ENCODE measurements at regions of chr2 and their contacts with region 1.

Region 1: DNA sequence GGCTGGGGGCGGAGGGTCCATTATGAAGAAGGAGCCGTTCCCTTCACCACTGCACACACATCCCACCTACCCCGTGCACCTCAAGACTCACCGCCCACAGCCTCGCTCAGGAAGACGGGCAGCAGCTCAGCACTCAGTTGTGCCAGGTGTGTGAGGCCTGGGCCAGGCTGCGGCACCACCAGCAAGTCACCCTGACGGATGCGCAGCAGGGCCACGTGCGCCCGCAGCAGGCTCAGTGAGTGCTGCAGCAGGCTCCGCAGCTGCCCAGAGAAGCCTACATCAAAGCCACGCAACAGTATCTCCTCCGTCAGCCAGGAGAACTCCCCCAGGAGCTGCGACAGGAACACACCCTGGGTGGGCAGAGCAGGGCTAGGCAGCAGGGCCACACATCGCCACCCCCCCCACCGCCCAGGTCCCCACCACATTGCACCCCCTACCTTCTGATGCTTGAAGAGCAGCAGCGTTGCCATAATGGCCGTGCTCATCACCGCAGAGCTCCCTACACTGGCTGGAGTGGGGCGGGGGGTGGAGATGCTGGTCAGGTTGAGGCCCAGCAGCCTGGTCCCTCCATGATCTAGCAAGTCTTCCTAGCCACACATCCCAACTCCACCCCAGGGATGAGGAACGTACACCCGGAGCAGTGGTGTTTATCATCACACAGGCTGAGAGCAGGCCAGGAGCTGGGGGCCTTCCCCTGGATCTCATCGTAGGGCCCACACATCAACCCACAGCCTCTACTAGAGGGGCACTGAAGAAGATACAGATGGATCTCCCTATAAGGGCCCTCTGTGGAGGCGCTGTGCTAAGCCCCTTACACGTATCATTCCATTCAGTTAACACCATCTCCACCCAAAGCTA is 10.2 kb downstream of the GPAT2 start:
- DNase-seq: no peak
- ATAC-seq: no peak
- H3K4me3 ChIP-seq: no peak overlapping the region
- H3K27ac ChIP-seq: no peak overlapping the region
- H3K4me1 ChIP-seq: no peaks in the 10 kb centered on the region
- H3K27me3 ChIP-seq: no peaks in the 10 kb centered on the region
- CTCF ChIP-seq: no peak

Region 2: DNA sequence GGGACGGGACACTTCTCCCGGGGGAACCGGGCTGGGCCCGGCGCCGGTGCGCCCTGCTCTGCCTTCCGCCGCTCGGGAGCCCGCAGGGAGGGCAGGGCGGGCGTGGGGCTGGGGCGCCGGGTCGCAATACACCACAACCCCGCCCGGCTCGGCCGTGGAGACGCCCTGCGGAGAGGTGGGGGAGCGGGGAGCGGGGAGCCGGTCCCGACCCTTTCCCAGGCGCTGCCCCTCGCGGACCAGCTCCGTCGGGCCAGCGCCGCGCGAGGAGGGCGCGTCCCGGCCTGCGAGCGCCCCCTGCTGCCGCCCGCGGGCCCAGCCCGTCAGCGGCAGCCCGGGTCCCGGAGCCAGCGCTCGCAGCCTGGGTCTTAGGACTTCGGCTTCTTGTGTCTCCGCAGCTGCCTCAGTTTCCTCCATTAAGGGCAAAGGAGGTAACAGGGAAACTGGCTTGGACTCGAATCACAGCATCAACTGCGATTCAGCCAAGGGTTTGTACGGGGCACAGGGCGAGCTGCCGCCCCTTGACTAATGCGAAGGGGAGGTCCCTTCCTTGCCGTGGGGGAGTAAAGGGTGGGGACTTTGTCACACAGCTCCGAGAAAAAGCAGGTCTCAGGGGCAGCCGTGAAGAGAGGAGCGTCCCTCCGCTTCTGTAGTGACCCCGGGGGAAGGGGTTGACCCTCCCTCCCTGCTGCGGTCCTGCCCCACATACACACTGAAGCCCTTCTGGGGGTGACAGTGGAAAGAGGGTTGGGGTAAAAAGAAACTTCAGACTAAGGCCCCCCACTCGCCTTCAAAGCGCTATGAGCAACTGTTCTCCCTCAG is 92.5 kb after region 1 on chr2:
- intact Hi-C with region 1: loop called (anchors 10 kb)
- DNase-seq: peak; percentile 55 to 67
- ATAC-seq: peak; percentile 76 to 90 (median 81)
- H3K4me3 ChIP-seq: peak overlapping the region; percentile 66
- H3K27ac ChIP-seq: no peak overlapping the region
- H3K4me1 ChIP-seq: peaks cover 6% of the 10 kb centered on the region
- H3K27me3 ChIP-seq: peaks cover 0 to 23% (median 0%) of the 10 kb centered on the region in 3 donors
- CTCF ChIP-seq: peak; percentile 87

Measured in psoas muscle (tissue), 8 donors.